ENCODE measurements at regions of chr2 and their contacts with region 1.

Region 1: GRCh38 chr2:177724398-177725287 is 332.1 kb downstream of the AGPS start:
- DNase-seq: peak; percentile 36 to 58
- ATAC-seq: peak; percentile 61 to 92 (median 74)
- H3K4me3 ChIP-seq: no peak overlapping the region
- H3K27ac ChIP-seq: peak overlapping the region in 2 of 10 donors; percentile 12 to 66
- H3K4me1 ChIP-seq: peaks cover 0 to 5% (median 0%) of the 10 kb centered on the region in 9 donors
- H3K27me3 ChIP-seq: no peaks in the 10 kb centered on the region
- CTCF ChIP-seq: peak; percentile 79 to 96 (median 88)

Region 2: GRCh38 chr2:177489719-177490301 is 234.8 kb before region 1 on chr2:
- intact Hi-C with region 1: loop called in 9 of 10 experiments (anchors 1 to 10 kb)
- DNase-seq: peak in 1 of 2 donors; percentile 13
- ATAC-seq: no peak
- H3K4me3 ChIP-seq: no peak overlapping the region
- H3K27ac ChIP-seq: no peak overlapping the region
- H3K4me1 ChIP-seq: no peaks in the 10 kb centered on the region
- H3K27me3 ChIP-seq: no peaks in the 10 kb centered on the region
- CTCF ChIP-seq: peak; percentile 29 to 78 (median 63)

Region 3: DNA sequence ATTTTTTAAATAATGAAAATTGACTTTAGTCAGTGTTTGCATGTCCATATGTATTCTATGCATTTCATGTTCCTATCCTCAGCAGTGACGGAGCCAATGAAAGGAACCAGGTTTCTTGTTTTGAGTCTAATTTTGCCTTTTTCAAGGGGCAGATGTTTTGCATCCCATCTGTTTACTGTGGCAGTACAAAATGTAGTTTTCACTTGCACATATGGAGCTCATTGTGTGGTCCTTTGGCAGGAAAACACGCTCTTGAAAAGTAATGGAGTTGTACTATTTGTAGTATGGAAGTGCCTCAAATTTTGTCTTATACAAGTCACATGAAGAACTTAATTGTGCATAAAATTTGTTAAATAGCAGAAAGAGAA is 204.3 kb before region 1 on chr2:
- intact Hi-C with region 1: no loop called
- DNase-seq: no peak
- ATAC-seq: no peak
- H3K4me3 ChIP-seq: no peak overlapping the region
- H3K27ac ChIP-seq: no peak overlapping the region
- H3K4me1 ChIP-seq: no peaks in the 10 kb centered on the region
- H3K27me3 ChIP-seq: no peaks in the 10 kb centered on the region
- CTCF ChIP-seq: no peak

Region 4: DNA sequence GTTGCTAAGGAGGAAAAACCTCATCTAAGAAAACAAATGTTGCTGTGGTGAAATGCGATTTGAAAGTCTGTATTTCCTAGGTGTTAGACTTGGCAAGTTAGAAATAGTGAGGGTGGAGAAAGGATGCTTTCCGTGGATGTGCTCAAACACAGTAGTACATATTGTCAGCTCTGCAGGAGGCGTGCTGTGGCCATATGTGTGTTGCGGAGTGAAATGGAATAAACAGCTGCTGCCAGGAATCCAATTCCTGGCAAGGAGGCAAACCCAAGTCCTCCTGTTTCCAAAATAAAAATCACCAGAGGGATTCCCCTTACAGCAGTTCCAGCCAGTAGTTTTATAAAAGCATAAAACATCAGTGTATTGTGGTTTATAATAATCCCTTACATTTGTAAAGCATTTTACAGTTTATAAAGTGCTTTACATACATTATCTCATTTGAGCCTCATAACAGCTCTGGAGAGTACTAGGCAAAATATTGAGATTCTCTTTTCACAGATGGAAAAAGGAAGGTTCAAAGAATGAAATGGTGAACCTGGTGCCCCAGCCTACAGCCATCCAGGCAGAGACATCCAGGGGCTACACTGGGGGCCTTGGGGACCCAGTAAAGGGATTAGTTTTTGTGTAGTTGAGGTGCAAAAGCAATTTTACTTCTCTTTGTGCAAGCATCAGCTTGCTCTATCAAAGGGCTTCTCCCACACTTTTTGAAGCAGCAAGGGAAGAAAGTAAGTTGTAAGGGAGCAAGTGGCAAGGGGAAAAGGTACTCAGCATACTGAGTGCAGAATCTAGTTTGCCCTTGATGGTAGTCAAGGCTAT is 126.1 kb before region 1 on chr2:
- intact Hi-C with region 1: loop called in 3 of 10 experiments (anchors 5 to 10 kb)
- DNase-seq: peak; percentile 22 to 52
- ATAC-seq: peak; percentile 67 to 93 (median 84)
- H3K4me3 ChIP-seq: peak overlapping the region in 2 of 10 donors; percentile 9 to 13
- H3K27ac ChIP-seq: peak overlapping the region in 7 of 10 donors; percentile 11 to 57 (median 44)
- H3K4me1 ChIP-seq: peaks cover 0 to 29% (median 22%) of the 10 kb centered on the region in 9 donors
- H3K27me3 ChIP-seq: no peaks in the 10 kb centered on the region
- CTCF ChIP-seq: peak in 3 of 9 donors; percentile 23 to 41 (median 35)

Region 5: DNA sequence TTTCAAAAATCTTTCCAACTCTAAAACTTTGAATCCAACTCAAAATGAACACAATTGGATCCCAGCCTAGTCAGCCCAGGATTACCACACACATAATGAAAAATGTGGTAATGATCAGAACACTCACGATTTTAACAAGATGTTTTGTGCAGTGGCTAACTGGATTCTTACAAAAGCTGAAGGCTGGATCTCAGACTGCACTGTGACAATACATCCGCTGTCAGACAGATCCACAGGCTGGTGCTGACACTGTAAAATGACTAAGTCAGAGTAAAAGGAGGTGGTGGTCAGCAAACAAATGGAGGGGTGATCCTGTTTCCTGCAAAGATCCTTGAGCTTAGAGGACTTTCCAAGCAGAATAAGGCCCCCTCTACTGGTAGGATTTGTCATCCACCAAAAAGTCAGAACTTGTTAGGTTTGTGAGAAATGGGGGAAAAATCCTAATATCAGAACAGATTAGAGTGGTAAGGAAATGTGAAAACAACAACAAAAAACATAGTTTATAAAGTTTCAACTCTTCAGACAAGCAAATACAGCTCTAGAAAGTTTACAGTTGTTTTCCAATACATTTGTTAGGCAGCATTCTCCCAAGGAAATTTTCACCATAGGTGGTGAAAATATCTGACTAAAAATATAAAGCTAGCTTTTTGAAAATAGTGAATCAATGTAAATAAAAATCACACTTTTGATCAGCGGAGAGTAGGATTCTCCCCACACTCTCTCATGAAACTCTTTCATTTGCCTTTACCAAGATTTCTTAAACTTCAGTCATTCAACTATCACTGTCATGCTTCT is 120.2 kb before region 1 on chr2:
- intact Hi-C with region 1: loop called in 3 of 10 experiments (anchors 5 to 10 kb)
- DNase-seq: peak in 1 of 2 donors; percentile 25
- ATAC-seq: peak in 7 of 8 donors; percentile 44 to 73 (median 66)
- H3K4me3 ChIP-seq: no peak overlapping the region
- H3K27ac ChIP-seq: peak overlapping the region in 2 of 10 donors; percentile 6 to 36
- H3K4me1 ChIP-seq: peaks cover 0 to 13% (median 3%) of the 10 kb centered on the region in 9 donors
- H3K27me3 ChIP-seq: no peaks in the 10 kb centered on the region
- CTCF ChIP-seq: peak; percentile 37 to 83 (median 67)

Region 6: DNA sequence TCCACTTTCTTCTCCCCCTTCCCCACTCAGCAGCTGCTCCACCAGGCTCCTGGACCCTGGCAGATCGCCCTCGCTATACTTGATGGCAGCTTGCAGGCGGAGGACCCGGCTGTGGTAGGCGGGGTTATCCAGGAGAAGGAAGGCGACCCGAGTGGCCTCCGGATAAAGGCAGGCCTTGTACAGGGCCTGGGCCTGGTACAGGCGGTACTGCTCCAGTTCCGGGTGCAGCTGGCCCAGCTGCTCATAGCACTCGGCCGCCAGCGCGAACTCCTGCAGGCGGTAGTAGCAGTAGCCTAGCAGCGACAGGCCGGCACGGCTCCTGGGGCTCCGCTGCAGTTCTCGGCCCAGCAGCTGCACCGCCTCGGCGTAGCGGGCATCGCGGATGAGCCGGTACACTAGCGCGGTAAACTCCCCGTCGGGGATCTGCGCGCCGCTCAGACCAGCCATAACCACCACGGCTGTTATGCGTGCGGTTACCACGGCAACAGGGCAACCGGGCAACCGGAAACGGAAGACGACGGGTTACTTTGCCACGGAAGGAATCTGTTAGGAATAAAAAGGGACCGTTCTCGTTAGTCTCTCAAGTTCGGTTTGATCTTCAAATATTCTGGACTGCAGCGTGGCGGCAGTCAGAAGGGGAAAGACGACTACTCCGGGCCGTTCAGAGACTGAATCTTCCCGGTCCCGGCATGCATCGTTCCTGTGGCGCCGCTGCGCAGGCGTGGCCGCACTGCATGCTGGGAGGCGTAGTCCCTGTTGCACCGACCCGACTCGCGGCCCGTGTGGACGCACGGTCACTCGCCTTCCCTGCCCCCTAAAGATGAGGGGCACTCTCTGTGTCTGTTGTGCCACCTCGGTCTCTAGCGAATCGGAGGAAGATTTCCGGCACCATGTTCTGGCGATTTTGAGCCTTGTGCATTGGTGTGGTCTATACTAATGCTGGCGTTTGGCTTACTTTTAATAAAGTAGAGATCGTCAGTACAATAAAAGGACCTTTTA is 106.1 kb before region 1 on chr2:
- intact Hi-C with region 1: loop called in 1 of 10 experiments (anchors 2 kb)
- DNase-seq: peak; percentile 90 to 93
- ATAC-seq: peak; percentile 97 to 99 (median 98)
- H3K4me3 ChIP-seq: peak overlapping the region; percentile 25 to 97 (median 75)
- H3K27ac ChIP-seq: peak overlapping the region; percentile 91 to 100 (median 96)
- H3K4me1 ChIP-seq: peaks cover 3 to 33% (median 11%) of the 10 kb centered on the region in 9 donors
- H3K27me3 ChIP-seq: no peaks in the 10 kb centered on the region
- CTCF ChIP-seq: no peak

Region 7: GRCh38 chr2:177763532-177764265 is 39.1 kb after region 1 on chr2:
- intact Hi-C with region 1: loop called in 1 of 10 experiments (anchors 5 kb)
- DNase-seq: peak; percentile 60 to 74
- ATAC-seq: peak; percentile 80 to 91 (median 84)
- H3K4me3 ChIP-seq: peak overlapping the region in 1 of 10 donors; percentile 20
- H3K27ac ChIP-seq: no peak overlapping the region
- H3K4me1 ChIP-seq: peaks cover 0 to 11% (median 6%) of the 10 kb centered on the region in 9 donors
- H3K27me3 ChIP-seq: no peaks in the 10 kb centered on the region
- CTCF ChIP-seq: peak; percentile 77 to 92 (median 85)

Measured in heart right ventricle (tissue), 16 donors.